CD8-positive, alpha-beta T cell (primary cell): ENCODE measurements at regions of chr6 and their contacts with region 1.

Region 1: GRCh38 chr6:118893807-118894424 is at the start of gene ASF1A:
- DNase-seq: peak; percentile 90 to 98 (median 95)
- ATAC-seq: peak; percentile 76
- H3K4me3 ChIP-seq: peak within 1 kb of the TSS; percentile 82 to 94
- H3K4me3 Mint-ChIP-seq: peak within 1 kb of the TSS; percentile 93
- H3K27ac ChIP-seq: peak within 1 kb of the TSS; percentile 78 to 79
- H3K27ac Mint-ChIP-seq: peak within 1 kb of the TSS; percentile 99
- H3K4me1 ChIP-seq: peaks cover 60% of the 10 kb centered on the region
- H3K4me1 Mint-ChIP-seq: peaks cover 66% of the 10 kb centered on the region
- H3K27me3 ChIP-seq: no peaks in the 10 kb centered on the region
- H3K27me3 Mint-ChIP-seq: no peaks in the 10 kb centered on the region
- CTCF ChIP-seq: no peak
- total RNA-seq, gene ASF1A: 15.6 to 17.1 TPM

Region 2: GRCh38 chr6:117674991-117675657 is 1218.8 kb before region 1 on chr6 and contains the start of gene NUS1:
- CTCF ChIA-PET with region 1: no interaction called
- POLR2A ChIA-PET with region 1: no interaction called
- intact Hi-C with region 1: loop called in 1 of 2 experiments (anchors 10 kb)
- DNase-seq: peak; percentile 98 to 99 (median 98)
- ATAC-seq: peak; percentile 96
- H3K4me3 ChIP-seq: peak within 1 kb of the TSS; percentile 75 to 79
- H3K4me3 Mint-ChIP-seq: peak within 1 kb of the TSS; percentile 91
- H3K27ac ChIP-seq: peak within 1 kb of the TSS; percentile 60 to 87
- H3K27ac Mint-ChIP-seq: peak within 1 kb of the TSS; percentile 94
- H3K4me1 ChIP-seq: peaks cover 38% of the 10 kb centered on the region
- H3K4me1 Mint-ChIP-seq: peaks cover 50% of the 10 kb centered on the region
- H3K27me3 ChIP-seq: no peaks in the 10 kb centered on the region
- H3K27me3 Mint-ChIP-seq: no peaks in the 10 kb centered on the region
- CTCF ChIP-seq: peak; percentile 67
- total RNA-seq, gene NUS1: 28.3 to 29.0 TPM

Region 3: GRCh38 chr6:118651282-118652050 is 242.4 kb before region 1 on chr6 and contains the start of gene CEP85L:
- CTCF ChIA-PET with region 1: no interaction called
- POLR2A ChIA-PET with region 1: interaction called, 3 read pairs
- intact Hi-C with region 1: loop called (anchors 1 to 2 kb)
- DNase-seq: peak; percentile 80 to 95 (median 91)
- ATAC-seq: peak; percentile 91
- H3K4me3 ChIP-seq: peak within 1 kb of the TSS; percentile 72 to 86
- H3K4me3 Mint-ChIP-seq: peak within 1 kb of the TSS; percentile 95
- H3K27ac ChIP-seq: peak within 1 kb of the TSS; percentile 79 to 81
- H3K27ac Mint-ChIP-seq: peak within 1 kb of the TSS; percentile 95
- H3K4me1 ChIP-seq: peaks cover 43% of the 10 kb centered on the region
- H3K4me1 Mint-ChIP-seq: peaks cover 51% of the 10 kb centered on the region
- H3K27me3 ChIP-seq: no peaks in the 10 kb centered on the region
- H3K27me3 Mint-ChIP-seq: no peaks in the 10 kb centered on the region
- CTCF ChIP-seq: no peak
- total RNA-seq, gene CEP85L: 86.2 to 89.0 TPM

Region 4: GRCh38 chr6:118770112-118770788 is 123.7 kb before region 1 on chr6:
- CTCF ChIA-PET with region 1: no interaction called
- POLR2A ChIA-PET with region 1: no interaction called
- intact Hi-C with region 1: no loop called
- DNase-seq: no peak
- ATAC-seq: no peak
- H3K4me3 ChIP-seq: no peak overlapping the region
- H3K4me3 Mint-ChIP-seq: no peak overlapping the region
- H3K27ac ChIP-seq: no peak overlapping the region
- H3K27ac Mint-ChIP-seq: no peak overlapping the region
- H3K4me1 ChIP-seq: peaks cover 14% of the 10 kb centered on the region
- H3K4me1 Mint-ChIP-seq: peaks cover 26% of the 10 kb centered on the region
- H3K27me3 ChIP-seq: no peaks in the 10 kb centered on the region
- H3K27me3 Mint-ChIP-seq: no peaks in the 10 kb centered on the region
- CTCF ChIP-seq: no peak

Region 5: DNA sequence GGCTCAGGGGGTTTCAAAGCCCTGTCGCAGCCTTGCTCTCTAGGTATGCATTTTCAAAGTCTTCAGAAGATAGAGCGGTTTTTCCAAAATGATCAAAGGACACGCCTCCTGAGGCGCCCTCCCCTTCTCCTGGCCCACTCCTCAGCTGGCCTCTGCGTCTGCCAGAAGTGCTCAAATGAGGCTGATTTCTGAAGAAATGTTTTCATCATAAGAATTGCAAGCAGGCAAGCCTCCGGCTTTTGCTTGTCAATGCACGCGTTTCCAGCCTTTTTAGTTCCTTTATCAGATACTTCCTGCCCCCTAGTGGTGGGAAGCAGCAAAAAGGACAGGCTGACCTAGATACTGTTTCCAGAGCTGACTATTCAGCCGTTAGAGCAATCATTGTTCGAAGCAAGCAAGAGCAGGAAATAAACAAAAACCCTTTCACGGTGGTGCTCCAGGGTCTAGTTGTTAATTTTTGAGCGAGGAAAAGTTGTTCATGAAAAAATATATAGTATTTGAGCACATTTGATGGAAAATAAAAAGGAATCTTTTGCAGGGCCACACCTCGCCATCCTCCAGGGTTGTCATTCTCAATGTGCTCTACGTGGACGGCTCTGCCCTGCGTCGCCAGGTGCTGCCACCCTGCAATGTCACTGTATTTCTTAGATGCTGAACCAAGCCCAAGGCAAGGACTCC is 93.4 kb before region 1 on chr6:
- CTCF ChIA-PET with region 1: interaction called, 25 read pairs
- POLR2A ChIA-PET with region 1: interaction called, 12 read pairs
- intact Hi-C with region 1: no loop called
- DNase-seq: peak; percentile 61 to 90 (median 85)
- ATAC-seq: peak; percentile 85
- H3K4me3 ChIP-seq: peak overlapping the region in 1 of 2 experiments; percentile 28
- H3K4me3 Mint-ChIP-seq: peak overlapping the region; percentile 70
- H3K27ac ChIP-seq: peak overlapping the region in 1 of 2 experiments; percentile 38
- H3K27ac Mint-ChIP-seq: peak overlapping the region; percentile 94
- H3K4me1 ChIP-seq: peaks cover 23% of the 10 kb centered on the region
- H3K4me1 Mint-ChIP-seq: peaks cover 42% of the 10 kb centered on the region
- H3K27me3 ChIP-seq: no peaks in the 10 kb centered on the region
- H3K27me3 Mint-ChIP-seq: no peaks in the 10 kb centered on the region
- CTCF ChIP-seq: peak; percentile 91

Region 6: GRCh38 chr6:118912646-118913045 is 18.7 kb after region 1 on chr6:
- CTCF ChIA-PET with region 1: interaction called, 5 read pairs
- POLR2A ChIA-PET with region 1: interaction called, 4 read pairs
- intact Hi-C with region 1: loop called in 1 of 2 experiments (anchors 2 kb)
- DNase-seq: no peak
- ATAC-seq: no peak
- H3K4me3 ChIP-seq: no peak overlapping the region
- H3K4me3 Mint-ChIP-seq: no peak overlapping the region
- H3K27ac ChIP-seq: no peak overlapping the region
- H3K27ac Mint-ChIP-seq: peak overlapping the region; percentile 38
- H3K4me1 ChIP-seq: no peaks in the 10 kb centered on the region
- H3K4me1 Mint-ChIP-seq: peaks cover 12% of the 10 kb centered on the region
- H3K27me3 ChIP-seq: no peaks in the 10 kb centered on the region
- H3K27me3 Mint-ChIP-seq: no peaks in the 10 kb centered on the region
- CTCF ChIP-seq: no peak

Region 7: DNA sequence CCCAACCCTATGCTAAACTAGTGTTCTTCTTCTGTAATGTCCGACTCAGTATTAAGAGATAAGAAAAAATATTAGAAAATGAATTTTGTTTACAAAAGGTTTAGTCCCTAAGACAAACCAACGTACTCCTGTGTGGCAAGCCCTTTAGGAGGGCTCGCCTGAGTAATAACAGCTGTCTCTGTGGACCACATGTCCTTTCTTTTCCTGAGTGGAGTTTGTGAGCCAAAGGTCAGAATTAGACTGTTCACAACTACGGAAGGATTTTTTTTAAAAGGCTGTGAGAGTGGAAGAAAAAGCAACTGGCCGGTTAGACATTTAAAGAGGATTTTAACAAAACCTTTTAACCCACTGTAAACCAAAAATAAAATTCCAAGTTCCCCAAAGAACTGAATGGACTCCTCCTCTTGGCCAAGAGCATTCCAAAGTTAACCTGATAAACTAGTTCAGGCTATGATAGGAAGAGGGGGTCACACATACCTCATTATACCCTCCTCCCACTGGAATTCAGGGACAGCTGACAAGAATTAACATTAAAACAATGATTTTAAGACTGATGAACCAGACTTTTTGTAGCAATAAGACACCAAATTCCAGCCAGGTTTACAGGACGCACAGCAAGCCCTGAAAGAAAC is 141.0 kb after region 1 on chr6:
- CTCF ChIA-PET with region 1: no interaction called
- POLR2A ChIA-PET with region 1: no interaction called
- intact Hi-C with region 1: no loop called
- DNase-seq: no peak
- ATAC-seq: no peak
- H3K4me3 ChIP-seq: no peak overlapping the region
- H3K4me3 Mint-ChIP-seq: no peak overlapping the region
- H3K27ac ChIP-seq: no peak overlapping the region
- H3K27ac Mint-ChIP-seq: no peak overlapping the region
- H3K4me1 ChIP-seq: no peaks in the 10 kb centered on the region
- H3K4me1 Mint-ChIP-seq: no peaks in the 10 kb centered on the region
- H3K27me3 ChIP-seq: no peaks in the 10 kb centered on the region
- H3K27me3 Mint-ChIP-seq: no peaks in the 10 kb centered on the region
- CTCF ChIP-seq: no peak

Region 8: GRCh38 chr6:119110601-119111548 is 217.0 kb after region 1 on chr6:
- CTCF ChIA-PET with region 1: interaction called, 3 read pairs
- POLR2A ChIA-PET with region 1: interaction called, 3 read pairs
- intact Hi-C with region 1: loop called in 1 of 2 experiments (anchors 1 kb)
- DNase-seq: peak in 7 of 9 experiments; percentile 13 to 77 (median 48)
- ATAC-seq: peak; percentile 83
- H3K4me3 ChIP-seq: no peak overlapping the region
- H3K4me3 Mint-ChIP-seq: no peak overlapping the region
- H3K27ac ChIP-seq: no peak overlapping the region
- H3K27ac Mint-ChIP-seq: no peak overlapping the region
- H3K4me1 ChIP-seq: no peaks in the 10 kb centered on the region
- H3K4me1 Mint-ChIP-seq: peaks cover 11% of the 10 kb centered on the region
- H3K27me3 ChIP-seq: no peaks in the 10 kb centered on the region
- H3K27me3 Mint-ChIP-seq: no peaks in the 10 kb centered on the region
- CTCF ChIP-seq: peak; percentile 74